Transverse colon (tissue), 4 donors: ENCODE measurements at regions of chr3 and their contacts with region 1.

Region 1: GRCh38 chr3:169668957-169669681 is 5.6 kb upstream of the MECOM start:
- DNase-seq: peak; percentile 80
- H3K4me3 ChIP-seq: peak overlapping the region in 3 of 4 donors; percentile 27 to 55 (median 35)
- H3K27ac ChIP-seq: peak overlapping the region in 3 of 4 donors; percentile 24 to 74 (median 60)
- H3K4me1 ChIP-seq: peaks cover 0 to 26% (median 14%) of the 10 kb centered on the region in 4 donors
- H3K27me3 ChIP-seq: peaks cover 91% of the 10 kb centered on the region
- CTCF ChIP-seq: peak; percentile 60 to 71 (median 67)
- EP300 ChIP-seq: no peak
- POLR2A ChIP-seq: no peak

Region 2: DNA sequence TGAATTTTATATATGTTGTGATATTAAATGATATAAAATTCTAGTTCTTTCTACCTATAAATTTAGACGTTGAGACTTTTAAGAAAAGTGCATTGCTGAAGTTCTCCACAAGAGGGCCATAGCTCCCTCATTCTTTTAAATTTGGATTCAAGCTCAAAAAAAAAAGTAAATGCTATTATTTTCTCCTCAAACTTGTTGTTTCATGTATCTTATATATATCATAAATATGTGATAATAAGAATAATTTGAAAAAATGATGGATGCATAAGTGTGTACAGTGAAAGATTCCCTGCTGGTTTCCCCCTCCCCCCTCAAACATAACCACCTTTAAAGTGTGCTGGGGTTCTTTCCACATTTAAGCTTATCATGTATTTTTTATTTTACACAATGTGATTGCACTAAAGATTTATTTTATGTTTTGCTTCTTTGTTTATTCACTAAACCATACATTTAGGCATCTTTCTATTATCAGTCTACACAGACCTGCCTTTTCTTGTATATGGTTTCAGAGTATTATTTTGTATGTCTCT is 804.0 kb before region 1 on chr3:
- in situ Hi-C with region 1: no loop called
- intact Hi-C with region 1: loop called (anchors 10 kb)
- DNase-seq: no peak
- H3K4me3 ChIP-seq: no peak overlapping the region
- H3K27ac ChIP-seq: no peak overlapping the region
- H3K4me1 ChIP-seq: peaks cover 0 to 47% (median 15%) of the 10 kb centered on the region in 4 donors
- H3K27me3 ChIP-seq: no peaks in the 10 kb centered on the region
- CTCF ChIP-seq: peak; percentile 59 to 76 (median 65)
- EP300 ChIP-seq: no peak
- POLR2A ChIP-seq: no peak

Region 3: DNA sequence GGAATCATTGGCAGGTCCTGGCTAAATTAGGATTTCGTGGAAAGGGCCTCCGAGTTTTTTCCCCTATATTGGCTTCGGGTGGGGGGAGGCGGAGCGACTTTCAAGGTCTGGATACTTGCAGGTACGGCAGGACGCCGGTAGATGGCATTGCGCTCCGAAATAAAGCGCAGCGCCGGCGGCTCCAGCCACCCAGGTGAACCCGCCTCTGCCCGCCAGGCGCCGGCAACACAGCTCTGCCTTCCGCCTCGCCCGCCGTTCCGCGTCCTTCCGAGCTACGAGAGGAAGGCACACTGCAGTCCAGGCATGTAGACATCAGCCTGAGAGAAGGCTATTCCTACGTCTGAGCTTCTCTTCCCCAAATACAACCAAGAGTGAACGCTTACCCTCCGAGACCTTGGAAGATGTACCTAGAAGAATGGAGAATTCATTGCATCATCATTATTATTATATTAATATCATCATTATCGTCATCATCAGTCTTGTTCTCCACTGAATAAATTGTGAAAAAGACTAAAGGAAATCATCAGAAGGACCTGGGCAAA is 519.7 kb before region 1 on chr3:
- in situ Hi-C with region 1: loop called in 3 of 4 experiments (anchors 10 to 25 kb)
- intact Hi-C with region 1: loop called (anchors 5 kb)
- DNase-seq: peak; percentile 90
- H3K4me3 ChIP-seq: peak overlapping the region in 3 of 4 donors; percentile 16 to 46 (median 17)
- H3K27ac ChIP-seq: peak overlapping the region; percentile 84 to 90 (median 88)
- H3K4me1 ChIP-seq: peaks cover 6 to 79% (median 36%) of the 10 kb centered on the region in 4 donors
- H3K27me3 ChIP-seq: peaks cover 53% of the 10 kb centered on the region
- CTCF ChIP-seq: peak; percentile 80 to 95 (median 83)
- EP300 ChIP-seq: no peak
- POLR2A ChIP-seq: peak; percentile 36

Region 4: DNA sequence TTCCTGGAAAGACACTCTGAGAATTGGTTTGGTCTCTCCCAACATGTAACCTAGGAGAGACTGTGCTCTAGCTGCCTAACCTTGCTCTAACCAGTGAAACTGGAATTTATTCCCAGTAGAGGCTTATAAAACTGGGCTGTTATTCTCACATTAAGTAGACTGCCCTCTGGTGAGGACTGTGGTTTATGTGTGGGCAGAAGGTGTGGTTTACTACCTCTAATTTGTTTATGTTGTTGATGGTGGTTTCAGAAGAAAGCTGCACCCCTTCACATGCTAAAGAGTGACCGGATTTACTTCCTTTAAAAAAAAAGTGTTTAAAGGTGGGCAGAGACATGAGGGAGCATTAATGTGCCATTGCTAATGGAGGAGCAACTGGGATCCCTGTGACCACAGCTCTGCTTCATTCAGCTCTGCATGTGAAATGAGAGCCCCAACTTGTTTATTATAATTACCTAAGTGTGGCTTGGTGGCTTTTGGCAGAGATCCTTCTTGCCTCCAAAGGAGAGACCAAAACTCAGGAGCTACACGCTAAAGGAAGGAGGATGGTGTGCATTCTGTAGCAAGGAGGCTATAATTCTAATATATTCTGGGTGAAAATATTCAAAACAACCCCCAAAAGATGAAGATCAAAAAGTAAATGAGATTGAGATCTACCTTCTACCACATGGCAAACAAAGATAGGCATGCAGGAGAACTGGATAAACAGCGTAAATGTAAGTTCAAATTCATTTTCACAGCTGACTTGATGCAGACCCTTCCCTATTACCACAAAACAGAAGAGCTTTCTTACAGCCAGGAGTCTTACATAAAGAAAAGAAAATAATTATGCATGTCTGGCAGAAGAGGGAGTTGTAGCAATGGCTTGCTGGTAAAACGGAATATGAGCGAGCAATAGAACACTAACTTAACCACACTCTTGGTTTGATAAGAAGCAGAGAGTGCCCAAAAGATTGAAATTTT is 278.6 kb before region 1 on chr3:
- in situ Hi-C with region 1: loop called in 1 of 4 experiments (anchors 25 kb)
- intact Hi-C with region 1: no loop called
- DNase-seq: peak; percentile 39
- H3K4me3 ChIP-seq: no peak overlapping the region
- H3K27ac ChIP-seq: peak overlapping the region; percentile 72 to 86 (median 80)
- H3K4me1 ChIP-seq: peaks cover 8 to 39% (median 25%) of the 10 kb centered on the region in 4 donors
- H3K27me3 ChIP-seq: no peaks in the 10 kb centered on the region
- CTCF ChIP-seq: peak in 3 of 5 experiments; percentile 21 to 47 (median 30)
- EP300 ChIP-seq: no peak
- POLR2A ChIP-seq: no peak

Region 5: DNA sequence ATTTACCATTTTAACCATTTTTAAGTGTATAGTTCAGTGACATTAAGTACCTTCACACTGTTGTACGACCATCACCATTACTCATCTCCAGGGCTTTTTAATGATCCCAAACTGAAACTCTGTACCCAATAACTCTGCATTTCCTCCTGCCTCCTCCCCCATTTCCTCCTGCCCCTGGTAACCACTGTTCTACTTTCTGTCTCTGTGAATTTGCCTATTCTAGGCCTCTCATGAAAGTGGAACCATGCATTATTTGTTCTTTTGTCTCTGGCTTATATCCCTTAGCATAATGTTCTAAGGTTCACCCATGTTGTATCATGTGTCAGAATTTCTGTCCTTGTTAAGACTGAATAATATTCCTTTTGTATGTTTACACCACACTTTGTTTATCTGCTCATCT is 159.8 kb before region 1 on chr3:
- in situ Hi-C with region 1: no loop called
- intact Hi-C with region 1: no loop called
- DNase-seq: no peak
- H3K4me3 ChIP-seq: no peak overlapping the region
- H3K27ac ChIP-seq: no peak overlapping the region
- H3K4me1 ChIP-seq: no peaks in the 10 kb centered on the region
- H3K27me3 ChIP-seq: no peaks in the 10 kb centered on the region
- CTCF ChIP-seq: no peak
- EP300 ChIP-seq: no peak
- POLR2A ChIP-seq: no peak

Region 6: DNA sequence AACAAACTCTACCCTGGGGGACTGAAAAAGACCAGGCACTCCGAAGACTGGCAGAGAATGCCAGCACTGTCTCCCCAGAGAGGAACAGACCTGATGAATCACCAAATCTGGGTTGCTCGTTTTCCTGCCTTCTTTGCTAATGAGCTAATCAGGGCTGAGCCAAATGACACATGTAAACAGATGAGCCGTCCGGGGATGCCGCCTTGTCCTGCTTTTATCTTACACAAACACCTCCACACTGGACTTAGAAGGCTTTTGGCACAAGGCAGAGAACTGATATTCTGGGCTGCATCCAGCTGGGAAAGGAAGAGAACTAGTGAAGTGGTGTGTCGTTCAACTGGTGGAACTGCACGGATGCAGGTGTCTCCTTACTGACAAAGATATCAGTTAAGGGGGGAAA is 93.7 kb before region 1 on chr3:
- in situ Hi-C with region 1: no loop called
- intact Hi-C with region 1: no loop called
- DNase-seq: no peak
- H3K4me3 ChIP-seq: no peak overlapping the region
- H3K27ac ChIP-seq: no peak overlapping the region
- H3K4me1 ChIP-seq: no peaks in the 10 kb centered on the region
- H3K27me3 ChIP-seq: no peaks in the 10 kb centered on the region
- CTCF ChIP-seq: no peak
- EP300 ChIP-seq: no peak
- POLR2A ChIP-seq: no peak

Region 7: GRCh38 chr3:170247875-170248274 is 578.8 kb after region 1 on chr3:
- in situ Hi-C with region 1: no loop called
- intact Hi-C with region 1: no loop called
- DNase-seq: no peak
- H3K4me3 ChIP-seq: no peak overlapping the region
- H3K27ac ChIP-seq: no peak overlapping the region
- H3K4me1 ChIP-seq: no peaks in the 10 kb centered on the region
- H3K27me3 ChIP-seq: no peaks in the 10 kb centered on the region
- CTCF ChIP-seq: no peak
- EP300 ChIP-seq: no peak
- POLR2A ChIP-seq: no peak

Region 8: DNA sequence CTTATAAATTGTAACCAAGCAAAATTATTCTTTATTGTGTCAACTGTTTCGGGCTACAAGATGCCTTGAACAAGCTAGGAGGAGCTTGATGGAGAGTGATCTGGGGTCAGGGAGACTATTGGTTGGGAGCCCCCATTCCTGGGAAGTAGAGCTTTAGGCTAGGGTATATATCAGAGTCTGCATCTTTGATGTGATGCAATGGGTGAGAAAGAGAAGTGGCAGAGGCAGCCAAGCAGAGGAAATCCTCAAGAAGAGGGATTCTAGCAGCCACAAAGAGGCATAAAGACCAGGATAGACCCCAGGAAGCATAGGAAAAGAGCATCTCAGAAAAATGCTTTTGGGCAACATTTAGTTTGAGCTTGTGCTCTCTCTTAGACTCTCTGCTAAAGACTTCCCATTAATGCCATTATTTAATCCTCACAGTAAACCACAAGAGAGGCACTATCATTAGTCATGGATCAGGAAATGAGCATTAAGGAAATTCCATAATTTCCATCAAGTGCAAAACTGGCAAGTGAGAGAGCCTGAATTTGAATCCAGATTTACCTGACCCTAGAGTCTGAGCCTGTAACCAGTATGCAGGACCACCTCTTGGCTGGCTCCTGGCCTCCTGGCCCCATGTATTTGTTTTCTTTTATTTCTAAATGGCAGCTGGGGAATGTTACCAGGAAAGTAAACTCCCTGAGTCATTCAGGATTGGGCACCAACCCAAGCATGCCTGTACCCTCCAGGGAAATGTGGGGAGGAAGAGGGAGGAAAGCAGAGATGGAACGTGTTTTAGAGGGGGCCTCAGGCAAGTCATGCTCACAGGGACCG is 1082.2 kb after region 1 on chr3:
- in situ Hi-C with region 1: no loop called
- intact Hi-C with region 1: no loop called
- DNase-seq: peak; percentile 11
- H3K4me3 ChIP-seq: no peak overlapping the region
- H3K27ac ChIP-seq: no peak overlapping the region
- H3K4me1 ChIP-seq: peaks cover 0 to 8% (median 6%) of the 10 kb centered on the region in 4 donors
- H3K27me3 ChIP-seq: no peaks in the 10 kb centered on the region
- CTCF ChIP-seq: no peak
- EP300 ChIP-seq: no peak
- POLR2A ChIP-seq: no peak